ENCODE measurements at regions of chrX and their contacts with region 1.

Region 1: DNA sequence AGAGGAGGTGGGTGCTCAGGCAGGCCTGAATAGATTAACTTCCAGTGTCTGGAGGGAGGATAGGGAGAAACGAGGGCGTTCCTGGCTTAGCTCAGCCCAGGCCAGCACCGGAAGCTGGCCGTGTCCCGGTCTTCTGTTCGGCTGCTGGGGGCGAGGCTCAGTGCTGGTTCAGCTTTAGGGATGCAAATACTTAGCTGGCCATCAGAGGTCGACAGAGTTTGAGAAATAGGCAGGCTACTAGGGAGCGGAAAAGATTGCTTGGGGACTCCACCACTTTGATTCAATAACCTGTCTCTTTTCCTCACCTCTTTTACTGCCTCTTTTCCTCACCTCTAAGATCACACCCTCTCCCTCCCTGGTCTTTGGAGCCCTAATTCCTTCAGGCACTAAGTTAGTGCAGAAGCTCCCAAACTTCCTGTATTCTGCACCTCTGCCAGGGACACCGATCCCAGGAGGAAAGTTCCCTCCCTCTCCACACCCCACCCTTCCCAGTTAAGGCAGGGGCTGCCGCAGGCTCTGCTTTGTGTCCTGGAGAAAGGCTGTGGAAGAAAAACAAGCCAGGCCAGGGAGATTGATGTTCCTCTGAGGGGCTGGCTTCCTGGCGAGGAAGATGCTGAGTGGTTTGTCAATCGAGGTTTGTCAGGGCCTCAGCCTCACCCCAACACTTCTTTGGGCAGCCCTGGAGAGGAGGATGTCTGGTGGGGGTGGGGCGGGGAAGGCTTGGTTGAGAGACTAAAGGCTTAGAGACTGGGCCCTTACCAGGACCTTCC is 6.0 kb upstream of the EFNB1 start:
- DNase-seq: peak; percentile 66
- H3K4me3 ChIP-seq: no peak overlapping the region
- H3K27ac ChIP-seq: no peak overlapping the region
- H3K4me1 ChIP-seq: no peaks in the 10 kb centered on the region; a peak in 1 of 4 replicates
- H3K27me3 ChIP-seq: peaks cover 6% of the 10 kb centered on the region; the same call in 1 of the 2 replicates
- CTCF ChIP-seq: peak; percentile 67
- EP300 ChIP-seq: no peak
- RAD21 ChIP-seq: peak; percentile 87

Region 2: DNA sequence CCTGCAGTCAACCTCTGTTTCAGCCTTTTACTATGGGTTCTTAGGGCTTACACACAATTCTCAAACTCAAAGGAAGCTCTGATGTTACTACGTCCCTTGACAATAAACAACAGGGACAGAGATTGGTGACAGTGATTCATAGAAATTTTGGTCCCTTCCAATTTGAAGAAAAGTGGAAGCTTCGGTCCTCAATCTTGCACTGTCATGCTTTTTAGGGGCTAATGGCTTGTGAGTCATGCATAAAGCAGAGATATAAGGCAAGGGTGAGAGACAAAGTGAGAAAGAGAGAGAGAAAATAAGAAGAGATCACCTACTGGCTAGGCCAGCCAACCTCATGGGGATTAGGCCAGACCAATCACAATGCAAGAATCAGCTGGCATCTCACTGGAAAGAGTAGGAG is 238.6 kb before region 1 on chrX:
- CTCF ChIA-PET with region 1: no interaction called
- POLR2A ChIA-PET with region 1: no interaction called
- DNase-seq: no peak
- H3K4me3 ChIP-seq: no peak overlapping the region
- H3K27ac ChIP-seq: no peak overlapping the region
- H3K4me1 ChIP-seq: no peaks in the 10 kb centered on the region
- H3K27me3 ChIP-seq: peaks cover 5% of the 10 kb centered on the region; the same call in 1 of the 2 replicates
- CTCF ChIP-seq: no peak
- EP300 ChIP-seq: no peak
- RAD21 ChIP-seq: no peak

Region 3: DNA sequence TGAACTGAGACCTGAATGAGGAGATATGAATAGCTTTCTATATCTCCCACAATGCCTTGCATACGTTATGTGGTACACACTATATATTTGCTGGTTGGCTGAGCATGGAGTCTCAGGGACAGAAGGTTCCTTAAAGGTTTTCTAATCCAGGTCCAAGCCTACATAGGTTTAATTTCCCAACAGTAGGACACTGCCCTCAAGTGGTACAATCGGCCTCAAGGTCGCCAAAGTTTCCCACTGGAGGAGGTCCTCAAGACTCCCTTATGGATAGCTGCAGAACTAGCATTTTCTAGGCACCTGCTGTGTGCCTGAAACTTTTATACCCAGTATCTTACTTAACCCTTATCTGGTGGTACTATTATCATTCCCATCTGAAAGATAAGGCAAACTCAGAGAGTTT is 15.0 kb before region 1 on chrX:
- CTCF ChIA-PET with region 1: interaction called, 11 read pairs
- POLR2A ChIA-PET with region 1: no interaction called
- DNase-seq: no peak
- H3K4me3 ChIP-seq: no peak overlapping the region
- H3K27ac ChIP-seq: no peak overlapping the region
- H3K4me1 ChIP-seq: no peaks in the 10 kb centered on the region
- H3K27me3 ChIP-seq: no peaks in the 10 kb centered on the region
- CTCF ChIP-seq: peak; percentile 54
- EP300 ChIP-seq: no peak
- RAD21 ChIP-seq: peak; percentile 48

Region 4: DNA sequence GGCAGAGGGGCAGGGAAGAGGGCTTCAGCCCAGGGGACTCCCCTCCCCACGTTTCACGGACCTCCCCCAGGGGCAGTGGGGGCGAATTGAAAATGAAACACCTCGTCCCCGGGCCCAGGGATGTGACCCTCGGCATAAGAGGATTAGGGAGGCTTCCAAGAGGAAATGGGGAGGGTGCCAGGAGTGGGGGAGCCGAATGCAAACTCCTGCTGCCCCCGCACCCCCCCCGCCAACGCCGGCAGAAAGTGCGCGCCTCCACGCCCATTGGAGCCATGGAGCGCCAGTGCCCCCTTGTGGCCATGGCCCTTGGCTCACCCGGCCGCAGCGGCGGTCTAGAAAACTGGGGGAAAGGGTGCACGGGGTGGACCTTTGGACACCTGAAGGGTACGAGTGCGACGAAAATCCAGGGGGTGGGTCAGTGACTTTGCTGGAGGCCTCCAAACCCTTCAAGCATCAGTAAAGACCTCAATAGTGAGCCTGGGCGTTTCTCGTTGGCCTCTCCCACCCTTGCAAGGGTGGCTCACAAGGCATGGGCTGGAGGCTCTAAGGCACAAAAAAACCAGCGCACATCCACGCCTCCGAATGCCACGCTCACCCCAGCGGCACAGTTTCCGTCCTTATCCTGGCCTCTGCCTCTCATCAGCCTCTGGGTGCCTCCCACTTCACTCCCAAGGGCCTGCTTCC is 463.2 kb after region 1 on chrX:
- CTCF ChIA-PET with region 1: interaction called, 30 read pairs
- POLR2A ChIA-PET with region 1: no interaction called
- DNase-seq: peak; percentile 87
- H3K4me3 ChIP-seq: peak overlapping the region; percentile 41 to 56
- H3K27ac ChIP-seq: no peak overlapping the region
- H3K4me1 ChIP-seq: peaks cover 0 to 6% of the 10 kb centered on the region in 2 experiments; a peak in 2 of 4 replicates
- H3K27me3 ChIP-seq: peaks cover 10% of the 10 kb centered on the region; the same call in 1 of the 2 replicates
- CTCF ChIP-seq: peak; percentile 90
- EP300 ChIP-seq: no peak
- RAD21 ChIP-seq: peak; percentile 80

Measured in SK-N-SH (cell line).